ENCODE measurements at regions of chr7 and their contacts with region 1.

Region 1: GRCh38 chr7:83936056-83936708 is 258.4 kb downstream of the SEMA3A start:
- DNase-seq: peak; percentile 69
- ATAC-seq: peak; percentile 86
- H3K4me3 Mint-ChIP-seq: no peak overlapping the region
- H3K27ac Mint-ChIP-seq: no peak overlapping the region
- H3K4me1 Mint-ChIP-seq: 0 out of 2 replicates have a peak, but pooled peaks cover 7% of the 10 kb centered on the region
- H3K27me3 Mint-ChIP-seq: no peaks in the 10 kb centered on the region
- CTCF ChIP-seq: peak; percentile 70

Region 2: DNA sequence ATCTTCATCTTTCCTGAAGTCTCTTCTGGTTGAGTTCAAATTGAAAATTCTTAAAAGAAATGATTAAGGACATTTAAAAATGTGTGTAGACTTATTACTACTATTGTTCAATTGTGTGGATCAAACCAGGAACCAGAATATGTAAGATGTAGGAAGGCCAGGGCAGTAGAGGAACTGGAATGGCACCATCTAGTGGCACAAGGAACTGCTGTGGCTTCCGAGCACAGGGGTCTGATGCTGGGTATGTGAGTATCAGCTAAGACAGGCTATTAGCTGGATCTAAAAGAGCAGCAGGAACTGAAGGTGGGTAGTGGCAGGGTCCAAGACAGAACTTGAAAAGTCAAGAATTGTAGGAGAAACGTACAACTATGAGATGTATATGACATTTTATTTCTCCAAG is 11.1 kb after region 1 on chr7:
- CTCF ChIA-PET with region 1: interaction called, 26 read pairs
- POLR2A ChIA-PET with region 1: no interaction called
- DNase-seq: peak; percentile 54
- ATAC-seq: peak; percentile 100
- H3K4me3 Mint-ChIP-seq: no peak overlapping the region
- H3K27ac Mint-ChIP-seq: no peak overlapping the region
- H3K4me1 Mint-ChIP-seq: no peaks in the 10 kb centered on the region
- H3K27me3 Mint-ChIP-seq: no peaks in the 10 kb centered on the region
- CTCF ChIP-seq: peak; percentile 37; the same call in 1 of the 2 replicates

Region 3: DNA sequence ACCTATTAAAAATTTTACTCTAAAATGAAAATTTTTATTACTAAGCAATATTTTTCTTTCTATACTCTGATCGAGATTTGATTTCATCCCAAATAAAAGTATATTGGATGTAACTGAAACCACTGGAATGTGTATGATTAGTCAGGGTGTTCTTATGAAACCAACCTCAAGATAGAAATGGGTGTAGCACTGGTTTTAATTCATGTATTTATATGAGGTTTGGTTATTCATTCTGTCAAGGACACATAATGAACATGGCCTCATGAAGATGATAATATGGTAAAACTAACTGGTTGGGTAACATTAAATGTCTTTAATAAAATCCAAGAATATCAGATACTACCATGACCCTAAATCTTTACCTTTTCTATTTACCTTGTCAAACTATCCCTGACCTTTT is 60.7 kb after region 1 on chr7:
- CTCF ChIA-PET with region 1: no interaction called
- POLR2A ChIA-PET with region 1: no interaction called
- DNase-seq: no peak
- ATAC-seq: no peak
- H3K4me3 Mint-ChIP-seq: no peak overlapping the region
- H3K27ac Mint-ChIP-seq: no peak overlapping the region
- H3K4me1 Mint-ChIP-seq: peaks cover 18% of the 10 kb centered on the region
- H3K27me3 Mint-ChIP-seq: no peaks in the 10 kb centered on the region
- CTCF ChIP-seq: no peak

Measured in WTC11 (cell line).